BJ (cell line): ENCODE measurements at regions of chr7 and their contacts with region 1.

Region 1: DNA sequence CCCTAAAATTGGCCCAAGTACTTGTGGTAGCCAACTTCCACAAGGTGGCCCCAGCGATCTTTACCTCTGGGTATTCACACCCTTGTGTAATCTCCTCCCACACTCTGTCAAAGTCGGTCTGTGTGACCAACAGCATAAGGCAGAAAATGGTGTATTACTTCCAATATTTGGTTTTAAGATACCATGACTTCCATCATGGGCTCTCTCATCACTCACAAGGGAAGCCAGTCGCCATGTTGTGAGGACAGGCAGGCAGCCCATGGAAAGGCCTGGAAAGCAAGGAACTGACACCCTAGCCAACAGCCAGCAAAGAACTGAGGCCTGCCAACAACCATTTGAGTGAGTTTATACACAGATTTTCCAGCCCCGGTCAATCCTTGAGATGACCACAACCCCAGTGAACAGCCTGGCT is 91.0 kb upstream of the KMT2E start:
- DNase-seq: peak; percentile 37
- H3K4me3 ChIP-seq: no peak overlapping the region
- H3K27me3 ChIP-seq: no peaks in the 10 kb centered on the region
- CTCF ChIP-seq: peak; percentile 79

Region 2: DNA sequence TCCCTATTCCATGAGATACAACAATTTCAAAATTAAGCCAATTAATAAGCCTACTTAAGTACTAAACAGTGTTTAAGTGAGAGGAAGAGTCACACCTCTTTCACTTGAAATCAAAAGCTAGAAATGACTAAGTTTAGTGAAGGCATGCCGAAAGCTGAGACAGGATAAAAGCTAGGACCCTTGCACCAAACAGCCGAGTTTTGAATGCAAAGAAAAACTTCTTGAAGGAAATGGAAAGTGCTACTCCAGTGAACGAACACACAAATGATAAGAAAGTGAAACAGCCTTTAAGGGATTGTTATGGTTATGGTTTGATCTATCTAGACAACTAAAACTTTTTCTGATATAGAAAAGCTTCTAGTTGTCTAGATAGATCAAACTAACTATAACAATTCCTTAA is 44.4 kb before region 1 on chr7:
- CTCF ChIA-PET with region 1: interaction called, 207 read pairs
- POLR2A ChIA-PET with region 1: no interaction called
- DNase-seq: no peak
- H3K4me3 ChIP-seq: no peak overlapping the region
- H3K27me3 ChIP-seq: no peaks in the 10 kb centered on the region
- CTCF ChIP-seq: no peak

Region 3: DNA sequence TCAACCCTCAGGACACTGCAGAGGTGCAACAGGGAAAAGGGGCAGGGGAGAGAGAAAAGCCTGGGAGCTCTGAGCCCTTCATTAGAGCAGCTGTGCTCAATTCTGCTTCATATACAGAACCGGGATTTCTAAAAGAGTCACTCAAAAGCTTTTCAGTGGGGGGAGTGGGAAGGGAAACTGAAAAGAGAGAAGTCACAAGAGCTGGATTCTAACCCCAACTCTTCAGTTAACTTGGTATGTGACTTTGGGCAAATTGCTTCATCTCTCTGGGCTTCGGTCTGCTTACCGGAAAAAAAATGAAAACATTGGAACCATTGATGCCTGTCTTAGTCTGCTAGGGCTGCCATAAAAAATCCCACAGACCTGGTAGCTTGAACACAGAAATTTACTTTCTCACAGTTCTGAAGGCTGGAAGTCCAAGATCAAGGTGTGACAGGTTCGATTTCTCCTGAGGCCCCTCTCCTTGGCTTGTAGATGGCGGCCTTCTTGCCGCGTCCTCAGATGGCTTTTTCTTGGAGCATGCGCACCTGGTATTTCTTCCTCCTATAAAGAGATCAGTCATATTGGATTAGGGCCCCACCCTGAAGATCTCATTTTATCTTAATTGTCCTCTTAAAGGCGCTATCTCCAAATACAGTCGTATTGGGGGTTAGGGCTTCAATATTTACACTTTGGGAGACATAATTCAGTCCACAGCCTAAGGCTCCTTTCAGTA is 27.3 kb before region 1 on chr7:
- CTCF ChIA-PET with region 1: interaction called, 17 read pairs
- POLR2A ChIA-PET with region 1: no interaction called
- DNase-seq: no peak
- H3K4me3 ChIP-seq: no peak overlapping the region
- H3K27me3 ChIP-seq: peaks cover 12% of the 10 kb centered on the region
- CTCF ChIP-seq: no peak

Region 4: DNA sequence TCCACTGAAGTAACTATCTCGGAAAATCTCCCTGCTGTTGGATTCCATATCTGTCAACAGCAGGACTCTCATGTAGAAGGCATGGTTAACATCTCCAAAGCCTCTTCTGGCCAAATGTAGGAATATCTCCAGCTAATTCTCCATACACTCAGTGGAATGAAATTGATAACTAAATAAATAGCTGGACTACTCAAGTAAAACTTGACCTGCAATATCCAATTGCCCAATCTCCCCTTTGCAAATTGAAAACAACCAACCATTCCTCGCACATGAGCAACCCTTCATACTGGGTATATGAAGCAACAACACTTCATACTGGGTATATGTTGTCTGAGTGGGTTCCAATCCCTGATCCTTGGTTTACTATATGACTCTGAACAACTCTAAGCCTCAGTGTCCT is 14.4 kb before region 1 on chr7:
- CTCF ChIA-PET with region 1: interaction called, 13 read pairs
- POLR2A ChIA-PET with region 1: no interaction called
- DNase-seq: no peak
- H3K4me3 ChIP-seq: no peak overlapping the region
- H3K27me3 ChIP-seq: peaks cover 1% of the 10 kb centered on the region
- CTCF ChIP-seq: no peak

Region 5: DNA sequence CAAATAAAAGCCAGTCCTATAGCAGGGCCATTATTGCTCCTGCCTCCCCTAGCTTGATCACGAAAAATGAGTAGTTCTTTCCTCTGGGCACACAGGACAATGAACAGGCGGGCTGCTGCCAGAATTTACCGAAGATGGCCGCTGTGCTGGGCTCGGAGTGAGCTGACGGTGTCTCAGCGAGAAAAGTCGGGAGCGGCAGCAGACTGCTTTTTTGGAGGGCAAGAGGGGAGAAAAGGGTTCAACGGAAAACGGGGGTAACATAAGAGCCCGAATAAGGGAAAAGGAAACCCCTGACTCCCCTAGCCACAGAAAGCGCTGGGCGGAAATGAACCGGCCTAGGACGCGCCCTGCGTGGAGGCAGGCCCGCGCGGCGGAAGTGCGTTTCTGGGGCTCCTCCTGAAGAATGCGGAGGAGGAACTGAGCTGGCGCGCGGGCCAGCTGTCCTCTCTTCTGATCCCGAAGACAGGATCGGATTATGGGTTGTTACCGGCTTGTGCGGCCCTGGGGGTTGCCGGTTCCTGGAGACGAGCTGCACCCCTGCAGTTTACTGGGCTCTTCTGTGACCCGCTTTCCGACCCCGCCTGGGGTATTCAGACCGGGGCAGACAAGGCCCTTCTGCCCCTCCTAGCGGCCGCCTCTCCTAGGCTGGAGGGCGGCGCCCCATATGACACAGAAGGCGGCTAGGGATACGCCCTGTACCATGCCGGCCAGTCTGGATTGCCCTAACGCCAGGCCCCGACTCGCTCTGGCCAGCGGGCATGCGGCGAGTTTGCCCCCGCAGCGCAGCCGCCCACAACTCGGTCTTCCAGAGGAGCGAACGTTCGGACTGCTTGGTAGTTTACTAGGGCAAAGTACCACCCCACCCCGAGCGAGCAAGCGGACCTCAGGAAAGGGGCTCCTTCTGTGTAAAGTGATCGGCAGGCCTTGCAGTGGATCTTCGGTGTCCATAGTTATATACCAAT is 60.8 kb after region 1 on chr7:
- CTCF ChIA-PET with region 1: interaction called, 25 read pairs
- POLR2A ChIA-PET with region 1: no interaction called
- DNase-seq: peak; percentile 35
- H3K4me3 ChIP-seq: peak overlapping the region; percentile 60
- H3K27me3 ChIP-seq: no peaks in the 10 kb centered on the region
- CTCF ChIP-seq: peak; percentile 64